Motor neuron (in vitro differentiated cells): ENCODE measurements at regions of chr9 and their contacts with region 1.

Region 1: GRCh38 chr9:73565833-73566465 is 414.3 kb downstream of the ANXA1 start:
- ATAC-seq: peak in 5 of 8 experiments; percentile 56 to 97 (median 82)
- H3K4me3 ChIP-seq: no peak overlapping the region
- H3K27ac ChIP-seq: no peak overlapping the region
- H3K4me1 ChIP-seq: no peaks in the 10 kb centered on the region

Region 2: DNA sequence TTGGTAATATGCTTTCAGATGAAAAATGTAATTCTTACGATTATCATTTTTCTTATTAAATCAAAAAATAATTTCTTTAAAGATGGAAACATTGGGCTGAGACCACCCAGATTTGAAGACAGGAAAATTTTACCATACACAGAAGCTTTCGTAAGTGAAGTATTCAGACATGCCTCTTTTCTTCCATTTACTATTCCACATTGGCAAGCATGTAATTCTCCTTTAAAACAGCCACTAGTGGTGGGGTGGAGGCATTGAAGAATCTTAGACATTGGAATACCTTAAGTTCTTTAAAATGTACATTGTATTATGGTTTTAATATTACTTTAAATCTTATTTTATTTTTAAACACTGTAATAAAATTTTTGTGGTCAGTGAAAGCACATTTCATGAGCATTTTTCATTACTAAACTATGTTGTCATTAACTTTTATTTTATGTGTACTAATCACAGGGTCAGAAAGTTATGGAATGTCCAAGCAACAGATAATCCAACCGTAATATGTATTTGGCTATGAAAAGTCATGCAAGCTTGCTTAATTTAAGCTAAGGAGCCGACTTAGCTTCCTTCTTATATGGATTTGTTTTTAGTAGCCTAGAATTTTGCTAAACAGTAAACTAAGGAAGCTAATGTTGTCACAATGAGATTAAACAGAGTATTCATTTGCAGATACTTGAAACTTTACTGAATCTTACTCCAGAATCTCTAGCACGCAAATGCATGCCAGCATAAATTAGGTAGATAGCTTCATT is 515.7 kb before region 1 on chr9:
- in situ Hi-C with region 1: no loop called
- ATAC-seq: peak in 6 of 8 experiments; percentile 10 to 92 (median 54)
- H3K4me3 ChIP-seq: no peak overlapping the region
- H3K27ac ChIP-seq: no peak overlapping the region
- H3K4me1 ChIP-seq: peaks cover 9 to 10% of the 10 kb centered on the region in 2 donors

Region 3: GRCh38 chr9:73200694-73201452 is 365.1 kb before region 1 on chr9:
- in situ Hi-C with region 1: loop called in 1 of 9 experiments (anchors 10 kb)
- ATAC-seq: peak; percentile 50 to 85 (median 62)
- H3K4me3 ChIP-seq: no peak overlapping the region
- H3K27ac ChIP-seq: no peak overlapping the region
- H3K4me1 ChIP-seq: peaks cover 4 to 5% of the 10 kb centered on the region in 2 donors

Region 4: DNA sequence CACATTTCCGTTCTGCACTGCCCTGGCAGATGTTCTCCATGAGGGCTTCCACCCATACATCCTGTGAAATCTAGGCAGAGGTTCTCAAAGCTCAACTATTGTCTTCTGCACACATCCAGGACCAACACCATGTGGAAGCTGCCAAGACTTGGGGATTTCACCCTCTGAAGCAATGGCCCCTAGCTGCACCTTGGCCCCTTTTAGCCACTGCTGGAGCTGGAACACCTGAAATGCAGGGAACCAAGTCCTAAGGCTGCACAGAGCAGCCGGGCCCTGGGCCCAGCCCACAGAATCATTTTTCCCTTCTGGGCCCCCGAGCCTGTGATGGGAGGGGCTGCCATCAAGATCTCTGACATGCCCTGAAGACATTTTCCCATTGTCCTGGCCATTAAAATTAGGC is 185.5 kb before region 1 on chr9:
- in situ Hi-C with region 1: loop called in 1 of 9 experiments (anchors 25 kb)
- ATAC-seq: no peak
- H3K4me3 ChIP-seq: no peak overlapping the region
- H3K27ac ChIP-seq: no peak overlapping the region
- H3K4me1 ChIP-seq: no peaks in the 10 kb centered on the region